CD8-positive, alpha-beta T cell (primary cell): ENCODE measurements at regions of chr3 and their contacts with region 1.

Region 1: DNA sequence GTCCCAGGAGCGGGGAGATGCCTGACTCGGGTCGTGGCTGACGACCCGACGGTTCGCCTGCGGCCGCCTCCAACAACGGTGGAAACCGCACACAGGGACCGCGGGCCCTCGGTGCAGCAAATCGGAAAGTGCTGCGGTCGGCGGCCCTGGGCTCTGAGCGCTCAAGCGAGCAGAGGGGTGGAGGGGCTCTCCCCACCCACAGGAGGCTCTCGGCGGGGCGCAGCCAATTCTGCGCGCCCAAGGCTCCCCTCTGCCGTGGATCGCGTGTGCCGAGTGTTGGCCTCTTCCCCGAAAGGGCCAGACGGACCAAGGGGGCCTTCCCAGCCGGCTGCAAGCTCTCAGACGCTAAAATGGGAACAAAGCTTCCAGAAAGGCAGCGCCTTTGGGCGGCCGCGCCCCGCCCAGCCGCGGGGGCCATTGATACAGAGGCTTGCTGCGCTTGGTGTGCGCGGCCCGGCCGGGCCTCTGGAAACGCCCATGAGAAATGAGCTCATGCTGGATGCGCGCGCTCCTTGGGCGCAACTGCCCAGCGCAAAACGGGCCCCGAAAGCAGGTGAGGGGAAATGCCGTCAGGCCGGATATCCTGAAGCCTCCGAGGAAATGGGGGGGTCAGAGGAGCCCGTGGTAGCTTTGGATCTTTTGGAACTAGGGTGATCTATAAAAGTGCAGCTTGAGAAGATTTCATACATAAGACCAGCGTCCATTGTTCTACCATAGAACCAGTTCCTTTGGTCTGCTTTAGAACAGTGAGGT is 1.2 kb upstream of the GSK3B start:
- DNase-seq: peak; percentile 68 to 91 (median 81)
- ATAC-seq: peak; percentile 27
- H3K4me3 ChIP-seq: peak overlapping the region; percentile 84 to 89
- H3K4me3 Mint-ChIP-seq: no peak overlapping the region
- H3K27ac ChIP-seq: peak overlapping the region; percentile 98
- H3K27ac Mint-ChIP-seq: no peak overlapping the region
- H3K4me1 ChIP-seq: peaks cover 32% of the 10 kb centered on the region
- H3K4me1 Mint-ChIP-seq: peaks cover 26% of the 10 kb centered on the region
- H3K27me3 ChIP-seq: no peaks in the 10 kb centered on the region
- H3K27me3 Mint-ChIP-seq: no peaks in the 10 kb centered on the region
- CTCF ChIP-seq: no peak

Region 2: DNA sequence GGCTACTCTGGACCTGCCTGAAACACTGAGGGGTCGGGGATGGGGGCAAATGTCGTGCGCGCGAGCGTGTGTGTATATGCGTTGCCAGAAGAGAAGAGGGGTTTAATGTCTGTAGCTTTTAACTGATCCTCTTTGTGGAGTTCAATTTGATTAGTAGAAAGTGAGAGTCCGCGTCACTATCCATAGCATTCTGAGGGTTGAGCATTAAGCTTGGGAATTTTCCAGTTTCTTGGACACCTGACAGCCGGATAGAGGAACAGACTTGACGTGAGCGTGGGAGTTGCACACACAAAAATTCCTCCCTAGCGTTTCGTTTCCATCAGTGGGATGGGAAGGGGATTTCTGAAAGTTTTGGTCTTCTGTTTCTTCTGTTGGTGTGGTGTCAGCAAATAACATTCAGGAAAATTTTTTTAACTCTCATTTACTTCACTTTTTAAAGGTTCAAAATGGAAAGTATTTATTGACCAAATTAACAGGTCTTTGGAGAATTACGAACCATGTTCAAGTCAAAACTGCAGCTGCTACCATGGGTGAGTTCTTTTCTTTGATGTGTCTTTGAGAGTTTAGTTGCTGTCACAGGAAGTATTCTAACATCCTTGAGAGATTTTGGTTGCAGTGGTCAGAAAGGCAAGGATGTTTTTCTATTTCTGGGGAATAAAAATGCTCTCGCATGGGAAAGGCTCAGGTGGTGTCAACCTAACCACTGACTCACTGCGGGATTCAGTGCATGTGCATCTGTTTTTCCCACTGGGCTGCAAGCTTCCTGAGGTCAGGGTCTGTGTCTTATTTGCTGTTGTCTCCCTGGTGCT is 625.8 kb before region 1 on chr3:
- CTCF ChIA-PET with region 1: no interaction called
- POLR2A ChIA-PET with region 1: interaction called, 10 read pairs
- intact Hi-C with region 1: loop called in 1 of 2 experiments (anchors 5 kb)
- DNase-seq: peak in 3 of 9 experiments; percentile 20 to 46 (median 22)
- ATAC-seq: peak; percentile 32
- H3K4me3 ChIP-seq: peak overlapping the region; percentile 79 to 84
- H3K4me3 Mint-ChIP-seq: peak overlapping the region; percentile 91
- H3K27ac ChIP-seq: peak overlapping the region; percentile 67 to 72
- H3K27ac Mint-ChIP-seq: peak overlapping the region; percentile 88
- H3K4me1 ChIP-seq: peaks cover 21% of the 10 kb centered on the region
- H3K4me1 Mint-ChIP-seq: peaks cover 33% of the 10 kb centered on the region
- H3K27me3 ChIP-seq: no peaks in the 10 kb centered on the region
- H3K27me3 Mint-ChIP-seq: no peaks in the 10 kb centered on the region
- CTCF ChIP-seq: no peak

Region 3: GRCh38 chr3:119810018-119810435 is 285.4 kb before region 1 on chr3:
- CTCF ChIA-PET with region 1: no interaction called
- POLR2A ChIA-PET with region 1: interaction called, 7 read pairs
- intact Hi-C with region 1: loop called in 1 of 2 experiments (anchors 2 kb)
- DNase-seq: peak in 8 of 9 experiments; percentile 35 to 73 (median 54)
- ATAC-seq: peak; percentile 89
- H3K4me3 ChIP-seq: peak overlapping the region; percentile 74 to 75
- H3K4me3 Mint-ChIP-seq: peak overlapping the region; percentile 91
- H3K27ac ChIP-seq: peak overlapping the region in 1 of 2 experiments; percentile 22
- H3K27ac Mint-ChIP-seq: peak overlapping the region; percentile 74
- H3K4me1 ChIP-seq: peaks cover 6% of the 10 kb centered on the region
- H3K4me1 Mint-ChIP-seq: peaks cover 12% of the 10 kb centered on the region
- H3K27me3 ChIP-seq: no peaks in the 10 kb centered on the region
- H3K27me3 Mint-ChIP-seq: no peaks in the 10 kb centered on the region
- CTCF ChIP-seq: no peak

Region 4: DNA sequence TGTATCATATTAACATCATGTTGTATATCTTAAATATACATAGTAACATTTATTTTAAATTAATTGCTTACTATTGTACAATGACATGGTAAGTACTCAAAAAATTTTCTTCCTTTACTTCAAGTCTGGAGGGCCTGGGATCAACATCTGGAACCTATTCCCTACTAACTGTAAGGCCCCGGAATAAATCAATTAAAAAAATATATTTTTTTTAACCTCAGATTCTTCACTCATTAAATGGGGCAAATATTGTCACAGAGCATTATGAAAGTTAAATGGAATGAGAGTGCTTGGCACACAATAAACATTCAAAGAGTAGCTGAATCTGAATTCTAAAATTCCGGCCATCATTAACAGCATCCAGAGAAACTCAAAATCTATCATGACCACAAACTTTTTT is 17.7 kb before region 1 on chr3:
- CTCF ChIA-PET with region 1: interaction called, 8 read pairs
- POLR2A ChIA-PET with region 1: interaction called, 6 read pairs
- intact Hi-C with region 1: loop called in 1 of 2 experiments (anchors 2 kb)
- DNase-seq: no peak
- ATAC-seq: no peak
- H3K4me3 ChIP-seq: no peak overlapping the region
- H3K4me3 Mint-ChIP-seq: no peak overlapping the region
- H3K27ac ChIP-seq: no peak overlapping the region
- H3K27ac Mint-ChIP-seq: peak overlapping the region; percentile 2
- H3K4me1 ChIP-seq: peaks cover 24% of the 10 kb centered on the region
- H3K4me1 Mint-ChIP-seq: peaks cover 78% of the 10 kb centered on the region
- H3K27me3 ChIP-seq: no peaks in the 10 kb centered on the region
- H3K27me3 Mint-ChIP-seq: no peaks in the 10 kb centered on the region
- CTCF ChIP-seq: no peak

Region 5: DNA sequence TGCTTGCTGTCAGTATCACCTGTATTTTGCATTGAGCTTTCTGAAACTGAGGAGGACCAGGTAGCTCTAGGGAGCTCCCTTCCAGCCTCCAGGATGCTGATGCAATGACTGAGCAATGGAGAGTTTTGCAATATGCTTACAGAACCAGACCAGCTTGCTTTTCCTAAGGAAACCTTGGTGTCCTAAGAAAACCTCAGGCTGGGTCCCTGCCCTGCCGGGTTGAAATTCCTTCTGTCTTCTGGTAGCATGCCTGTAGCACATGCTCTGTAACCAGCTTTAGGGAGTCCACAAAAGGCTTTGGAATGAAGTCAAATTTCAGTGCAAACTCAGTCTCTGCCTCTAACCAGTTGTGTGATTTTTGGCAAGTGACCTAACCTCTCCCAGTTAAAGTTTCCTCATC is 64.6 kb after region 1 on chr3:
- CTCF ChIA-PET with region 1: no interaction called
- POLR2A ChIA-PET with region 1: no interaction called
- intact Hi-C with region 1: no loop called
- DNase-seq: no peak
- ATAC-seq: no peak
- H3K4me3 ChIP-seq: no peak overlapping the region
- H3K4me3 Mint-ChIP-seq: no peak overlapping the region
- H3K27ac ChIP-seq: no peak overlapping the region
- H3K27ac Mint-ChIP-seq: no peak overlapping the region
- H3K4me1 ChIP-seq: no peaks in the 10 kb centered on the region
- H3K4me1 Mint-ChIP-seq: no peaks in the 10 kb centered on the region
- H3K27me3 ChIP-seq: no peaks in the 10 kb centered on the region
- H3K27me3 Mint-ChIP-seq: no peaks in the 10 kb centered on the region
- CTCF ChIP-seq: no peak

Region 6: DNA sequence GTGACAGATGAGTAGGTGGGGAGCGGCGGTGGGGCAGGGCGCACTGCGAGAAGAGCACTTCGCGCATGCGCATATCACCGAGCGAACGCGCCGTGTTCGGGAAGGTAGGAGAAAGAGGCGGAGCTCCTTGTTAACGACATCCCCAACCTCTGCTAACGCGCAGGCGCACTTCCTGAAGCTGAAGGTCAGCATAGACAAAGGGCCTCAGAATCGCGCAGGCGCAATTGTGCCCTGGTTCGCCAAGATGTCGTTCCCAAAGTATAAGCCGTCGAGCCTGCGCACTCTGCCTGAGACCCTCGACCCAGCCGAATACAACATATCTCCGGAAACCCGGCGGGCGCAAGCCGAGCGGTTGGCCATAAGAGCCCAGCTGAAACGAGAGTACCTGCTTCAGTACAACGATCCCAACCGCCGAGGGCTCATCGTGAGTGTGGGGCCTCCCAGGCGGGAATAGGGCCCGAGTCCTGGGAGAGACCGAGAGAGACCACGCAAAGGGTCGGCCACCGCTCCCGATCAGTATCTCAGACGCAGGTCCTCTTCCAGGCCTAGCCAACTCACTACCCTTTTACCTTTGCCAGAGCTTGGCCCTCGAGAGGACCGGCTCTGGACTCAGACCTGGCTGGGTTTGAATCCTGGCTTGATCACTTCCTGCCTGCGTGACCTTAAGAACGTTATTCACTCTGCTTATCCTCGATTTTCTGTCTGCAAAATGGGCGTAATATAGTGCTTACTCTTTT is 500.9 kb after region 1 on chr3 and contains the start of gene NDUFB4:
- CTCF ChIA-PET with region 1: no interaction called
- POLR2A ChIA-PET with region 1: no interaction called
- intact Hi-C with region 1: loop called (anchors 1 to 5 kb)
- DNase-seq: peak; percentile 87 to 99 (median 95)
- ATAC-seq: peak; percentile 92
- H3K4me3 ChIP-seq: peak within 1 kb of the TSS; percentile 77 to 92
- H3K4me3 Mint-ChIP-seq: peak within 1 kb of the TSS; percentile 94
- H3K27ac ChIP-seq: peak within 1 kb of the TSS; percentile 91 to 95
- H3K27ac Mint-ChIP-seq: peak within 1 kb of the TSS; percentile 97
- H3K4me1 ChIP-seq: peaks cover 34% of the 10 kb centered on the region
- H3K4me1 Mint-ChIP-seq: peaks cover 12% of the 10 kb centered on the region
- H3K27me3 ChIP-seq: no peaks in the 10 kb centered on the region
- H3K27me3 Mint-ChIP-seq: no peaks in the 10 kb centered on the region
- CTCF ChIP-seq: no peak
- total RNA-seq, gene NDUFB4: 63.2 to 71.5 TPM